ENCODE measurements at regions of chr16 and their contacts with region 1.

Region 1: DNA sequence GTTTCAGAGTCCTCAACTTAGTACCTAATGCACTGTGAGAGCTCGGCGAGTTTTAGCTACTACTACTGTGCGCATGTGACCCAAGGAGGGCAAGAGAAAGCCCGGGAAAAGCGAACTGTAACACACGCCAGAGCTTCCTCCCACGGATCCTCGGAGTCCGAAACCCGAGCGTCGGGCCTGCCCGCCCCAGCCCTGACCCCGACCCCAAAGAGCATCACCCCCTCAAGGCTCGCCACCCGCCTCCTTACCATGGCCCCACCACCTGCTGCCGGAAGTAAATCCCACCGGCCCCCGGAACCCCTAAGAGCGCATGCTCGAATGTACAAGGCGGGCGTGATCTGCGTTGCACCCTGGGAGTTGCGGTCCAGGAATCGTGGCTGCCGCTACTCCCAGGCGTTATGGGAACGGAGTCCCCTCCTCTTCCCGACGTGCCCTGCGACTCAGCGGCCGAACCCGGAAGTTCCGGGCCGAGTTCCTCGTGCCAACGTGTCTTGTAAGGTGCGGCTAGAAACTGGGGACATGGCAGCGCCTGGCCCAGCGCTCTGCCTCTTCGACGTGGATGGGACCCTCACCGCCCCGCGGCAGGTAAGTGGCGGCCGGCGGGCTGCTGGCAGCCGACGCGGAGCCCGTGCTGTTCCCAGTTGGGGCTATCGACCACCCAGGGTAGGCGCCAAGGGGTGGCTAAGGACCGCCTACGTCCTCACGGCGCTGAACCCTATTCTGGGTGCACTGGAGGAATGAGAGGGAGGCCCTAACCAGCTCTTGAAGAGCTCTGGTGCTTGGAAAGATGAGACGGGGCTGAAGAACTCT is at the starts of genes PMM2 and TMEM186:
- DNase-seq: peak; percentile 96 to 98 (median 97)
- ATAC-seq: peak; percentile 99 to 100 (median 100)
- H3K4me3 ChIP-seq: peak within 1 kb of the TSS; percentile 71 to 100 (median 88)
- H3K27ac ChIP-seq: peak within 1 kb of the TSS in 11 of 12 donors; percentile 65 to 90 (median 83)
- H3K4me1 ChIP-seq: peaks cover 0 to 40% (median 27%) of the 10 kb centered on the region in 12 donors
- H3K27me3 ChIP-seq: no peaks in the 10 kb centered on the region
- CTCF ChIP-seq: no peak
- POLR2A ChIP-seq: peak in 1 of 2 donors; percentile 71
- total RNA-seq, gene PMM2: 9.8 to 25.1 (median 13.4) TPM
- total RNA-seq, gene TMEM186: 9.6 to 14.6 (median 12.4) TPM

Region 2: GRCh38 chr16:8567750-8568617 is 229.6 kb before region 1 on chr16:
- intact Hi-C with region 1: loop called in 6 of 10 experiments (anchors 5 to 10 kb)
- DNase-seq: peak; percentile 53 to 74 (median 65)
- ATAC-seq: peak in 3 of 4 donors; percentile 77 to 88 (median 84)
- H3K4me3 ChIP-seq: no peak overlapping the region
- H3K27ac ChIP-seq: no peak overlapping the region
- H3K4me1 ChIP-seq: peaks cover 0 to 12% (median 0%) of the 10 kb centered on the region in 12 donors
- H3K27me3 ChIP-seq: peaks cover 0 to 7% (median 0%) of the 10 kb centered on the region in 9 donors
- CTCF ChIP-seq: peak; percentile 92 to 98 (median 97)
- POLR2A ChIP-seq: no peak

Region 3: DNA sequence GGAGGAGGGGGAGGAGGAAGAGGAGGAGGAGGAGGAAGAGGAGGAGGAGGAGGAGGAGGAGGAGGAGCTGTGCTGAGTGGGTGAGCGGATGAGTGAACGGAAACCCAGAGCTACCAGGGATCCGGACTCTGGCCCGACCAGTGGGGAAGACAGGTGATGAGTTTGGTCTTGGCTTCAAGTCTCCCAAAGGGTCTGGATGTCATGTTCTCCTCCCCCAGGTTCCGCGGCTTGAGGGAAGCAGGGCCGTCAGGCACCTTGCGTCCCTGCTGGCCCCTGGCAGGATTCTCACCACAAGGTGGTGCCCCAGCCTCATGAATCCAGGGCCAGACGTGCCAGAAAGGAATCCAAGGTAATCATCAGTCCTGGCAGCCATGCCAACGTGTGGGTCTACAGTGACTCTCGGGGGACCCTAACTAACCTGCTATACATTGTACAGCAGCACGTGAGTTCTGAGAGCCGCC is 136.7 kb before region 1 on chr16:
- intact Hi-C with region 1: loop called (anchors 2 to 5 kb)
- DNase-seq: peak in 4 of 5 donors; percentile 25 to 66 (median 45)
- ATAC-seq: peak in 3 of 4 donors; percentile 85 to 89 (median 87)
- H3K4me3 ChIP-seq: no peak overlapping the region
- H3K27ac ChIP-seq: no peak overlapping the region
- H3K4me1 ChIP-seq: no peaks in the 10 kb centered on the region
- H3K27me3 ChIP-seq: no peaks in the 10 kb centered on the region
- CTCF ChIP-seq: peak; percentile 38 to 69 (median 59)
- POLR2A ChIP-seq: no peak

Region 4: DNA sequence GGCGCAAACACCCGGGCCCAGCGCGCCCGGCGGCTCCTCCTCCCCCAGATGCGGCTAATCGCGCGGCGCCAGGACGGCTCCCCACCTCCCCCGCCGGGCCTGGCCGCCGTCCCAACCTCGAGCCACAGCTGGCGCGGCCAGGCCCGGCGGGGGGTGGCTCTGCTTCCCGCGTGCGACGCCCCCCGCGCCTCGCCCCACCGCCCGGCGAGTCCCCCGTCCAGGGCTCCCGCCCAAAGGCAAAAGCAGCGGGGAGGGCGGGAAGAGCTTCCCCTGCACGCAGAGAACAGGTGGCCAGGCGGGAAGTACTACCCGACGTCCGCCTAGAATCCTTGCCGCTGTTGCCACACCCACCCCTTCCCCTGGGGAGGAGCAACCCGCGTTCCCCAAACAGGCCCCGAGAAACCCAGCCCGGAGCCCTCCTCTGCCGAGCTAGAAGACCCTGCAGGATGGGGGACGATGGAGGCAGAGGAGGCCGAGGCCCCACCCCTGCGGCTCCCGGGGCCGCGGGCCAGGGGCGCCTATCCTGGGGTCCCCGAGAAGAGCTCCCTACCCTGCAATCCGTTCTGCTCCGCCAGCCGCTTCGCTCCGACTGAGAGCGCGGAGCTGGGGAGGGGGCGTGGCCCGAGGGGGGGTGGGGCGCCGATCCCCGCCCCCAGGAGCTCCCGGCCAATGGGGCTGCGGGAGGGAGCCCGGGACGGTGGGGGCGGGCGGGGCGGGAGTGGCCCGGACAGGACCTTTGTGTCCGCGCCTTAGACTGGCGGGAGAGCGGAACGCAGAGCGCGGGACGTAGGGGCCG is 71.0 kb after region 1 on chr16 and contains the start of gene CARHSP1:
- intact Hi-C with region 1: loop called in 7 of 10 experiments (anchors 2 to 5 kb)
- DNase-seq: peak; percentile 89 to 92 (median 90)
- ATAC-seq: peak; percentile 88 to 92 (median 90)
- H3K4me3 ChIP-seq: peak within 1 kb of the TSS; percentile 60 to 97 (median 74)
- H3K27ac ChIP-seq: peak within 1 kb of the TSS; percentile 28 to 95 (median 90)
- H3K4me1 ChIP-seq: peaks cover 0 to 65% (median 42%) of the 10 kb centered on the region in 12 donors
- H3K27me3 ChIP-seq: no peaks in the 10 kb centered on the region
- CTCF ChIP-seq: no peak
- POLR2A ChIP-seq: peak in 1 of 2 donors; percentile 65
- total RNA-seq, gene CARHSP1: 20.0 to 62.4 (median 29.0) TPM

Region 5: DNA sequence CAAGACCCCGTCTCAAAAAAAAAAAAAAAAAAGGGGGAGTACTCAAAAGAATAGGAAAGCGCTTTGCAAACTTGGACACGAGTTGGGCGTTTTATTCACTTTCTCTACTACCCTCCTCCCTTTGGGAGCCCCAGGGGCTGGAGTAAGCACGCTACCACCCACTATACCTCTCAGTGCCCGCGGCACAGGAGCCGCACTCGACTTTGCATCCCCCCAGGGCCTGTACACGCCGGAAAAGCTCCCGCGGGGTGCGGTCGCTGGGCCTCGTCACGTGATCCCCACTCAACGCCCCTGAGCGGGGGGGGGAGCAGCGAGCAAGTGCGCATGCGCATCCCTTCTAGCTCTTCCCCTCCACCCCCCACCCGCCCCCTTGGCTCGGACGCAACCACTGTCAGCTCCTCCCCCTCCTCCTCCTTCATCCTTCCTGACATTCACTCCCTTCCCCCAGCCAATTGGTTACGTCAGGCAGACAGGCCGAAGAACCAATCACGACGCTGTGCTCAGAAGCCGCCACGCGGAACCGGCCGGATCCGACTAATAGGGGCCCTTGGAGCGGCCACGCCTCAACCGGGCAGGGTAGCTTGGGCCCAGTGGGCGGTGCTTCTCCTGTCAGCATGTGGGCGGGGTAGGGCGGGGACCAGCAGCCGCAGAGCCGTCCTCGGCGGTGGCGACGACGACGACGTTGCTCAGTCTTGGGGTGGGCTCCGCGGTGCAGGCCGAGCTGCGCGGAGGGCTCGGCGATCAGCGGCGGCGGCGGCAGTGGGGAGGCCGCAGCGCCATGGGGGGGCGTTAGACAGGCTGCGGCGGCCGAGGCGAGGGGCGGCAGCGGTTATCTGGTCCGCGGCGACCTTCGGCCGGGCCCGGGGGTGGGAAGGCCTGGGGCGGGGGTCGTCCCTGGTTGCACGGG is 293.6 kb after region 1 on chr16 and contains the start of gene HAPSTR1:
- intact Hi-C with region 1: loop called in 1 of 10 experiments (anchors 5 kb)
- DNase-seq: peak; percentile 100
- ATAC-seq: peak; percentile 92 to 99 (median 96)
- H3K4me3 ChIP-seq: peak within 1 kb of the TSS; percentile 75 to 99 (median 94)
- H3K27ac ChIP-seq: peak within 1 kb of the TSS; percentile 95 to 100 (median 99)
- H3K4me1 ChIP-seq: peaks cover 0 to 47% (median 37%) of the 10 kb centered on the region in 12 donors
- H3K27me3 ChIP-seq: no peaks in the 10 kb centered on the region
- CTCF ChIP-seq: no peak
- POLR2A ChIP-seq: peak; percentile 93 to 99
- total RNA-seq, gene HAPSTR1: 48.9 to 78.4 (median 62.5) TPM